ENCODE measurements at regions of chr3 and their contacts with region 1.

Region 1: DNA sequence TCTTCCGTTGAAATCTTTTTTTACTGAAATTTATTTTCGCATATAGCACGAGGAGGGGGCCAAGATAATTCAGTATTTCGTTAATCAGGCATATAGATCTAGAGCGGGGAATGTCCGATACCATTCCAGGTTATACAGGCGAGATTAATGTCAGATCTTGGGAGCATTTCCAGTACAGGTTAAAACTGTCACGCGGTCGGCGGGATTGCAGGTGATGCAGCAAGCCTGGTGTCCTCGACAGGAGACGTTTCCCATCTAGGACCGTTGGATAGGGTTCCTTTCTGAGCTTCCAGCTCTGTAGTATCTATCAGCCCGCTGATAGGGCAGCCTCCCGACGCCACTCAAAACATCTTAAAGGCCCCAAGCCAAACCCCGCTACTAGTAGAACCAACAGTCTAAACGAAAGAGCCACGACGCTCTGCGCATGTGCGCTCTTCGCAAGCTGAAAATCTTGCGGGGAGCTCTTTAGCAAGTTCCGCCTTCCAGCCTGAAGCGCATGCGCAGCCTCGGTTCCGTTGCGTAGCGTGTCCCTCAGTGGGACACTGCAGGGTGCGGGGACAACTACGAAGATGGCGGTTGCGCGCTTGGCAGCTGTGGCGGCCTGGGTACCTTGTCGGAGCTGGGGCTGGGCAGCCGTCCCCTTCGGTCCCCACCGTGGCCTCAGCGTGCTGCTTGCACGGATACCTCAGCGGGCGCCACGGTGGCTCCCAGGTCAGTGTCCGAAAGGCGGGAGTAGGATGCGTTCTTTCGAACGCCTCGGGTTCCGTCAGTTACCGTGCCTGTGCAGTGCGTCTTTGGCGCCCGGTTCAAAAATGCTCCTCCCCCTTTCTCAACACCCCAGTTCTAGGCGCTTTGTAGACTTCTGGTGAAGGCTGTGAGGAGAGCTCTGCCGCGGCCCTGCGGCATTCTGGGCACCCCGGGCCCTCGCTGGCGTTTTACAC is at the start of gene ABHD10:
- DNase-seq: peak; percentile 95 to 96
- H3K4me3 ChIP-seq: peak within 1 kb of the TSS; percentile 80
- H3K27ac ChIP-seq: peak within 1 kb of the TSS; percentile 62
- H3K4me1 ChIP-seq: peaks cover 30% of the 10 kb centered on the region
- H3K27me3 ChIP-seq: no peaks in the 10 kb centered on the region
- CTCF ChIP-seq: no peak
- total RNA-seq, gene ABHD10: 57.4 and 57.6 TPM in 2 replicates

Region 2: DNA sequence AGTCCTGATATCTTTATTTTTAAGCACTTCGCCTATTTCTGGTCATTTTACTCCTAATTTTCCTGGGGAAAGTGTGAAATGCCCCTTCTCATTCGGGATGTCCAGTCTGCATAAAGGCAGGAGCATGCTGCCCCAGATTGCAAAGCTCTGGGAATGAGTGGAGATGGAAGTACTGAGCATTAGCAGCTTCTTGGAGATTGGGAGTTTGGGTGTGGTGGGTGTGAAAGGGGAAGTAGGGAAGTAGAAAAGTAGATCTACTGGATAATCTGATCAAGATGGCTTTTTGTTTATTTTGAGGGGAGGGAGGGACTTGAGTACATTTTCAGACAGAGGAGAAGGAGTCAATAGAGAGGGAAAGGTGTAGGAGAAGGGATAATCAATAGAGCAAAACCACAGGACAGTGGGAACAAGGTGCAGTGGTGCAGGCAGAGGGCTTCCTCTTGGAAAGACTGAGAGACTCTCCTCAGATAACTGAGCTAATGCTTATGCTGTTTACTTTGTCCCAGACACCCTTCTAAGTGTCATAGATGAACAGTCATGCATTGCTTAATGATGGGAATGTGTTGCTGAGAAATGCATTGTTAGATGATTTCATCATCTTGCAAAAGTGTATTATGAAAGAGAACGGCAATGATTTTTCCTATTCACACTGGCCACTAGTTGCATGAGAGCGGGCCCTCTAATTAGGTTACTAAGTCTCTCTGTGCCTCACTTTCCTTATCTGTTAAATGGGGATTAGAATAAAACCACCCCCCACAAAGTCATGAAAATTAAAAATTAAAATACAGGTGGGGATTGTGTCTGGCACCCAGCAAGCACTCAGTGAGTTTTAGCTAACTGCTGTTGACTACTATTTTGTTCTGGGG is 74.2 kb before region 1 on chr3:
- CTCF ChIA-PET with region 1: no interaction called
- POLR2A ChIA-PET with region 1: no interaction called
- intact Hi-C with region 1: no loop called
- DNase-seq: peak; percentile 47 to 99
- H3K4me3 ChIP-seq: no peak overlapping the region; the same call in 1 of the 2 replicates
- H3K27ac ChIP-seq: peak overlapping the region; percentile 96
- H3K4me1 ChIP-seq: peaks cover 55% of the 10 kb centered on the region
- H3K27me3 ChIP-seq: no peaks in the 10 kb centered on the region
- CTCF ChIP-seq: peak; percentile 30

Region 3: GRCh38 chr3:112032098-112032731 is 53.5 kb after region 1 on chr3:
- CTCF ChIA-PET with region 1: interaction called, 15 read pairs
- POLR2A ChIA-PET with region 1: no interaction called
- intact Hi-C with region 1: no loop called
- DNase-seq: no peak
- H3K4me3 ChIP-seq: no peak overlapping the region
- H3K27ac ChIP-seq: no peak overlapping the region
- H3K4me1 ChIP-seq: no peaks in the 10 kb centered on the region
- H3K27me3 ChIP-seq: no peaks in the 10 kb centered on the region
- CTCF ChIP-seq: no peak

Measured in PC-9 (cell line).